OCI-LY7 (cell line): ENCODE measurements at regions of chr7 and their contacts with region 1.

Region 1: DNA sequence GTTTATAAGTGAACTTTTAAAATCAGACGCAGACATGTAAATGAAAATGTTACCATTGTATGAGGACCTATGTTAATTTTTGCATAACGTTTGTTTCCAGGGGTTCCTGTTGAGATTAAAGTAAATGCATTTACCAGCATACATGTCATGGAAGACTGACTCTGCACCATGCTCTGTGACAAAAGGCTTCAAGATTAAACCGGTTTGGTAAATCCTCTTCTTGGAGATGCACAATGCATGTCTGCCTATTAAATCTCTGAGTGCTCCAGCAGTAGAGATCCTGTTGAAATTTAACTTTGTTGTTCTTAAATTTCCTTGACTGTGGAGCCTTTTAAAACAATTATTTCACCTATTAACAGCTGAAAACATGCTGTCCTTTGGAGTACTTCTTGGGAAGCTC is 36.5 kb upstream of the JAZF1 start:
- DNase-seq: no peak
- H3K4me3 ChIP-seq: no peak overlapping the region
- H3K27ac ChIP-seq: no peak overlapping the region
- H3K4me1 ChIP-seq: no peaks in the 10 kb centered on the region
- CTCF ChIP-seq: no peak

Region 2: DNA sequence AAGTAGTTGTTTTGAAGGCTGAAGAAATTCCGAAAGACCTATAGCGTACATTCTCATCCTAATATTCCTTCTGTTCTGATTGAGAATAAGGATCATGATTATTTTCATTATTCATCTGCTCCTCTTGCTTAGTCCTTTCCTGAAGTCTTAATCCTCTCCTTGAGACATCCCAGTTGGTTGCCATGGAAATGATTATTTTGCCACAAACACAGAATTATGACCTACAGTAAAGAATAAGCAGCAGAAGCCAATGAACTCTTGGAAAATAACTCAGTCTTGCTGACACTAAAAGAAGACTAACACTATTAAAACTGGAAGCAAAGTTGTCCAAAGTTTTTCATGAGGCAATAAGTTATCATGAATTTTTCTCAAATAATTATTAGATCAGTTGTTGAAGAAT is 11.3 kb after region 1 on chr7:
- CTCF ChIA-PET with region 1: no interaction called
- POLR2A ChIA-PET with region 1: no interaction called
- intact Hi-C with region 1: no loop called
- DNase-seq: no peak
- H3K4me3 ChIP-seq: no peak overlapping the region
- H3K27ac ChIP-seq: no peak overlapping the region
- H3K4me1 ChIP-seq: no peaks in the 10 kb centered on the region
- CTCF ChIP-seq: no peak

Region 3: GRCh38 chr7:28579551-28579950 is 362.4 kb after region 1 on chr7:
- CTCF ChIA-PET with region 1: no interaction called
- POLR2A ChIA-PET with region 1: interaction called, 10 read pairs
- intact Hi-C with region 1: no loop called
- DNase-seq: no peak
- H3K4me3 ChIP-seq: no peak overlapping the region
- H3K27ac ChIP-seq: no peak overlapping the region
- H3K4me1 ChIP-seq: peaks cover 25% of the 10 kb centered on the region
- CTCF ChIP-seq: no peak